ENCODE measurements at regions of chr16 and their contacts with region 1.

Region 1: GRCh38 chr16:11356573-11357331 is 11.5 kb downstream of the RMI2 start:
- DNase-seq: no peak
- ATAC-seq: peak; percentile 42
- H3K4me3 ChIP-seq: no peak overlapping the region
- H3K27ac ChIP-seq: no peak overlapping the region
- H3K4me1 ChIP-seq: peaks cover 44% of the 10 kb centered on the region
- H3K27me3 ChIP-seq: no peaks in the 10 kb centered on the region
- CTCF ChIP-seq: peak; percentile 70 to 88 (median 74); a peak in 5 of 6 replicates
- EP300 ChIP-seq: no peak
- POLR2A ChIP-seq: no peak
- RAD21 ChIP-seq: peak; percentile 88

Region 2: GRCh38 chr16:10981697-10982216 is 375.0 kb before region 1 on chr16:
- CTCF ChIA-PET with region 1: interaction called, 10 read pairs
- POLR2A ChIA-PET with region 1: no interaction called
- RAD21 ChIA-PET with region 1: interaction called, 5 read pairs
- SMC1A ChIA-PET with region 1: interaction called, 6 read pairs
- in situ Hi-C with region 1: no loop called
- intact Hi-C with region 1: no loop called
- DNase-seq: no peak
- ATAC-seq: peak; percentile 94
- H3K4me3 ChIP-seq: no peak overlapping the region
- H3K27ac ChIP-seq: peak overlapping the region; percentile 55; the same call in 1 of the 2 replicates
- H3K4me1 ChIP-seq: peaks cover 20% of the 10 kb centered on the region
- H3K27me3 ChIP-seq: no peaks in the 10 kb centered on the region
- CTCF ChIP-seq: peak; percentile 78 to 85 (median 80)
- EP300 ChIP-seq: peak in 1 of 2 experiments; percentile 64; a peak in 1 of 4 replicates
- POLR2A ChIP-seq: no peak
- RAD21 ChIP-seq: peak; percentile 54

Region 3: DNA sequence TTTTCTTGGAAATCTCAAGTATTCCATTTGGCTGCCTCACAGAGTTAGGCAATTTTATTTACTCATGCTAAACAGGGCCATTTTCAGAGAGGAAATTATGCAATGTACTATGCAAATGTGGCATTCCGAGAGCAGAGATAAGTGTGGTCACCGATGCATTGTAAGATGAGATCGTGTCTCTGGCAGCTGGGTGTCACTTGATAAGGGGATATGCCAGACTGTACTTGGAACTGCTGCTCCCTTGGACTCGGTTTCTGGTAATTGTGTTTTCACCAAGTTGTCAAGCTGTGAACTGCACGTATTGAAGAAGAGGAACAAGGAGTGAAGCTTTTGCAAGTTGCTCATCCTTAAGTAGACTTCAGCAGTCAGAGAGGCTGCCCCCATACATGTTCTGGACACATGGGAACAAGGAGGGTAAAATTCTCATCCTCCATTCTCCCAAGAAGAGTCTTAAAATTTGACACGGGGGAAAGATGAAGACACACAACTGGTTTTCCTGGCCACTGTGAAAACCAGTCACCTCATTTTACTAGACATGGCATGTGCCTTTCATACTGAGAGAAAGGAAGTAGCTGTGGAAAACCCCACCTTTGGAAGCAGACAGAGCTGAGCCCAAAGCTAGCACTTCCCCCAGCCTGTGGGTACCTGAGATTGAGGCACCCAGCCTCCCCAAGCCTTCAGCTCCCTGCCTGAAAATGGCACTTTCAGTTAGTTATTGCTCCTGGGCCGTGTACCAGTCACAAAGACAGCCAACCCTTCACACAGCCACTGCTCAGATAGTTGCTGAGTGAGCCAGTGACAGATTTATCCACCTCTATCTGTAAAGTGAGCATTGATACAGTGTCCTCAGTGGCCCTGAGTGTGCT is 251.5 kb before region 1 on chr16:
- CTCF ChIA-PET with region 1: interaction called, 4 read pairs
- POLR2A ChIA-PET with region 1: no interaction called
- RAD21 ChIA-PET with region 1: no interaction called
- SMC1A ChIA-PET with region 1: no interaction called
- in situ Hi-C with region 1: no loop called
- intact Hi-C with region 1: loop called (anchors 10 kb)
- DNase-seq: peak; percentile 86
- ATAC-seq: peak; percentile 85
- H3K4me3 ChIP-seq: 0 out of 2 replicates have a peak overlapping the region, but pooled peaks have one; percentile 31
- H3K27ac ChIP-seq: peak overlapping the region; percentile 87
- H3K4me1 ChIP-seq: peaks cover 38% of the 10 kb centered on the region
- H3K27me3 ChIP-seq: no peaks in the 10 kb centered on the region
- CTCF ChIP-seq: no peak
- EP300 ChIP-seq: peak in 1 of 2 experiments; percentile 46; a peak in 1 of 4 replicates
- POLR2A ChIP-seq: peak; percentile 69
- RAD21 ChIP-seq: no peak

Region 4: DNA sequence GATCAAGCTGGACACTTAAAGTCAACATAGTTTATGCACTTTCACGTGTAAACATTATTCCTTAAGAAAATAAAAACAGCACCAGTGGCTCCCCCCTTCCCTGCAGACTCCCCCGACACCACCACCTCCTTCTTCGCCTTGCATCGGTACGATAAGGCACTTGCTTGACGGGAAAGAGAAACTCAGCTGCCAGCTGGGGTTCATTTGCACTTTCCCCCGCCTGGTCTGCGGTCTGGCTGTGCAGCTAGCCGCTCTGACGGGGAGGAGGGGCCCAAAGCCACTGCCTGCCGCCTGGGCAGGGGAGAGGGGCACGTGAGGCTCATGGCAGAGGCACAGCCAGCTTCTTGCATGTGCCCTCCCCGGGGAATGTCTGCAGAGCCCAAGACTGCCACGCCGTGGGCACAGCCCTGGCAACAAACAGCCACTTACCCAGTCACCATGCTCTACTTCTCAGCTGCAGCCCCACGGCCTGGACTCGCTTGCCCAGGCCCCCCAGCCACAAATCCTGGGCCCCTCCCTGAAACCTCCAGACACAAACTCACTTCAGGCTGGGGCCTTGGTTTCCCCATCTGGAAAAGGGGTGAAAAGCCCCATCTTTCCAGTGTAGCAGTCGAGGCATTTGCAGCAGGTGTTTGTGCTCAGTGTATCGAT is 59.1 kb before region 1 on chr16:
- CTCF ChIA-PET with region 1: interaction called, 28 read pairs
- POLR2A ChIA-PET with region 1: interaction called, 60 read pairs
- RAD21 ChIA-PET with region 1: interaction called, 82 read pairs
- SMC1A ChIA-PET with region 1: interaction called, 104 read pairs
- in situ Hi-C with region 1: no loop called
- intact Hi-C with region 1: loop called (anchors 1 kb)
- DNase-seq: peak; percentile 92
- ATAC-seq: peak; percentile 91
- H3K4me3 ChIP-seq: peak overlapping the region; percentile 30; the same call in 1 of the 2 replicates
- H3K27ac ChIP-seq: peak overlapping the region; percentile 91
- H3K4me1 ChIP-seq: peaks cover 57% of the 10 kb centered on the region
- H3K27me3 ChIP-seq: no peaks in the 10 kb centered on the region
- CTCF ChIP-seq: peak in 1 of 3 experiments; percentile 26; a peak in 2 of 6 replicates
- EP300 ChIP-seq: peak; percentile 86 to 94
- POLR2A ChIP-seq: peak; percentile 58
- RAD21 ChIP-seq: 0 out of 2 replicates have a peak, but pooled peaks have one; percentile 13

Region 5: DNA sequence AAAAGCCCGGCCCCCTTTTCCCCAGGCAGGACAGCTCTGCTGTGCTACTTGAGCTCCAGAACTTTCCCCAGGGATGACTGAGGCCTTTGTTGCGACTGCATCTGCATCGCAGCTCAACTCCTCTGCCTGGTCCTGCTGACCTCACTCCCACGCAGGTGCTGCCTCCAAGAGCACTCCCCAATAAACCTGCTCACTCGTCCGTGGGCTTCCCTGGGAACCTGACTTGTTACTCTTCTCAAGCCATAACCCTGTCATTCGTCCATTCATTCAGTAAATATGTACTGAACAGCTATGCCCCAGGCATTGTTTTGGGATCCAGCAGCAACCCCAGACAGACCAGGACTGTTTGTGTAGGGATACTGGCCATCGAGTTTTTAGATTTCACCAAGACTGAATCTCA is 23.0 kb before region 1 on chr16:
- CTCF ChIA-PET with region 1: interaction called, 18 read pairs
- POLR2A ChIA-PET with region 1: interaction called, 16 read pairs
- RAD21 ChIA-PET with region 1: interaction called, 77 read pairs
- SMC1A ChIA-PET with region 1: interaction called, 40 read pairs
- in situ Hi-C with region 1: no loop called
- intact Hi-C with region 1: loop called (anchors 1 kb)
- DNase-seq: no peak
- ATAC-seq: no peak
- H3K4me3 ChIP-seq: no peak overlapping the region
- H3K27ac ChIP-seq: no peak overlapping the region
- H3K4me1 ChIP-seq: peaks cover 12% of the 10 kb centered on the region
- H3K27me3 ChIP-seq: no peaks in the 10 kb centered on the region
- CTCF ChIP-seq: no peak
- EP300 ChIP-seq: no peak
- POLR2A ChIP-seq: no peak
- RAD21 ChIP-seq: no peak

Region 6: GRCh38 chr16:11379420-11379819 is 22.7 kb after region 1 on chr16:
- CTCF ChIA-PET with region 1: interaction called, 4 read pairs
- POLR2A ChIA-PET with region 1: interaction called, 6 read pairs
- RAD21 ChIA-PET with region 1: interaction called, 18 read pairs
- SMC1A ChIA-PET with region 1: interaction called, 12 read pairs
- in situ Hi-C with region 1: no loop called
- intact Hi-C with region 1: no loop called
- DNase-seq: peak; percentile 71
- ATAC-seq: peak; percentile 98
- H3K4me3 ChIP-seq: no peak overlapping the region
- H3K27ac ChIP-seq: peak overlapping the region; percentile 41
- H3K4me1 ChIP-seq: peaks cover 12% of the 10 kb centered on the region
- H3K27me3 ChIP-seq: no peaks in the 10 kb centered on the region
- CTCF ChIP-seq: no peak
- EP300 ChIP-seq: peak; percentile 80 to 88
- POLR2A ChIP-seq: 0 out of 2 replicates have a peak, but pooled peaks have one; percentile 30
- RAD21 ChIP-seq: 0 out of 2 replicates have a peak, but pooled peaks have one; percentile 12

Measured in GM12878 (cell line).